Gastrocnemius medialis (tissue), 4 donors: ENCODE measurements at regions of chr2 and their contacts with region 1.

Region 1: GRCh38 chr2:74482801-74483674 is at the starts of genes CCDC142 and TTC31:
- DNase-seq: peak; percentile 96 to 97
- ATAC-seq: peak; percentile 99 to 100
- H3K4me3 ChIP-seq: peak within 1 kb of the TSS; percentile 82 to 97 (median 87)
- H3K27ac ChIP-seq: peak within 1 kb of the TSS; percentile 83 to 94 (median 88)
- H3K4me1 ChIP-seq: peaks cover 24 to 25% of the 10 kb centered on the region in 2 donors
- H3K27me3 ChIP-seq: no peaks in the 10 kb centered on the region
- CTCF ChIP-seq: peak; percentile 74 to 90 (median 85)
- POLR2A ChIP-seq: peak; percentile 25 to 45
- total RNA-seq, gene CCDC142: 5.5 to 7.3 (median 6.0) TPM
- total RNA-seq, gene TTC31: 6.1 to 9.6 (median 7.7) TPM

Region 2: GRCh38 chr2:74472086-74472944 is 10.7 kb before region 1 on chr2 and contains the start of gene MRPL53:
- in situ Hi-C with region 1: no loop called
- intact Hi-C with region 1: loop called (anchors 1 kb)
- DNase-seq: peak; percentile 86 to 90
- ATAC-seq: peak; percentile 95 to 96
- H3K4me3 ChIP-seq: peak within 1 kb of the TSS; percentile 67 to 88 (median 79)
- H3K27ac ChIP-seq: peak within 1 kb of the TSS; percentile 79 to 90 (median 87)
- H3K4me1 ChIP-seq: peaks cover 20 to 25% of the 10 kb centered on the region in 2 donors
- H3K27me3 ChIP-seq: no peaks in the 10 kb centered on the region
- CTCF ChIP-seq: no peak
- POLR2A ChIP-seq: peak; percentile 48 to 68
- total RNA-seq, gene MRPL53: 26.5 to 48.7 (median 41.5) TPM

Region 3: DNA sequence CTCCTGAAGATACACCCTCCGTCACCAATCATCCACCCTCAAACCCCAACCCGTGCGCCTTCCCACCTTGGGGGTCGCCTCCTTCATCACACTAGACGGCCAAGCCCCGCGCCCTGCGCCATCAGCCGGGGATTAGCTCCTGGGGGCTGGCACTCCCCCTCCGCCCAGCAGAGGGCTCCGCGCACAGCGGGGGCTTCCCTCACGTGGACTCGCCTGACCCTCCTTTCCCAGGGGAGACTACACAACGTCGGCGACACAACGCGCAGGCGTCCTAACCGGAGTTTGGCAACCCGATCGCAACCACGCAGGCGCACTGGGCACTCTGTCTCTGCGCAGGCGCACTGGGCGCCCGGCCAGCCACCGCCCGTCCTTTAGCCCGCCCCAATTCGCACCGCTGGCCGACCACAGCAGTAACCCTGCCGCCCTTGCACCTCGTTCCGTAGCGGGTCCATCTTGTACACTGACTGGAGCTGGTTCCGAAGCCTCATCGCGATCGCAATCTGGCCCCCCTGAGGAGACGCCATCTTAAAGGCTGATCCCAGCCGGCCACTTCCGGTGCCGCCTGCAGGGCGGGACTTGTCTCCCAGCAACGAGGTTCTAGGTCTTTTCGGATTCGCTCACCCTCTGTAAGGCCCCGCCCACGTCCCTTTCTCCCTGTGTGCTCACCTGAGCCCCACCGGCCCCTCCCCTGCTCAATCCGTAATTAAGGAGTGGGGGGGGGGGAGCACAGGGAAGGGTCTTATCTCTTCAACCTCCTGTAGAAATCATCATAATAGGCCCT is 24.3 kb after region 1 on chr2 and contains the start of gene PCGF1:
- in situ Hi-C with region 1: no loop called
- intact Hi-C with region 1: loop called (anchors 1 kb)
- DNase-seq: peak; percentile 98 to 99
- ATAC-seq: peak; percentile 98 to 99
- H3K4me3 ChIP-seq: peak within 1 kb of the TSS; percentile 75 to 99 (median 84)
- H3K27ac ChIP-seq: peak within 1 kb of the TSS; percentile 92 to 100 (median 98)
- H3K4me1 ChIP-seq: peaks cover 25 to 41% of the 10 kb centered on the region in 2 donors
- H3K27me3 ChIP-seq: peaks cover 26 to 53% (median 38%) of the 10 kb centered on the region in 3 donors
- CTCF ChIP-seq: peak in 4 of 5 experiments; percentile 18 to 29 (median 24)
- POLR2A ChIP-seq: no peak
- total RNA-seq, gene PCGF1: 14.2 to 23.6 (median 20.0) TPM

Region 4: DNA sequence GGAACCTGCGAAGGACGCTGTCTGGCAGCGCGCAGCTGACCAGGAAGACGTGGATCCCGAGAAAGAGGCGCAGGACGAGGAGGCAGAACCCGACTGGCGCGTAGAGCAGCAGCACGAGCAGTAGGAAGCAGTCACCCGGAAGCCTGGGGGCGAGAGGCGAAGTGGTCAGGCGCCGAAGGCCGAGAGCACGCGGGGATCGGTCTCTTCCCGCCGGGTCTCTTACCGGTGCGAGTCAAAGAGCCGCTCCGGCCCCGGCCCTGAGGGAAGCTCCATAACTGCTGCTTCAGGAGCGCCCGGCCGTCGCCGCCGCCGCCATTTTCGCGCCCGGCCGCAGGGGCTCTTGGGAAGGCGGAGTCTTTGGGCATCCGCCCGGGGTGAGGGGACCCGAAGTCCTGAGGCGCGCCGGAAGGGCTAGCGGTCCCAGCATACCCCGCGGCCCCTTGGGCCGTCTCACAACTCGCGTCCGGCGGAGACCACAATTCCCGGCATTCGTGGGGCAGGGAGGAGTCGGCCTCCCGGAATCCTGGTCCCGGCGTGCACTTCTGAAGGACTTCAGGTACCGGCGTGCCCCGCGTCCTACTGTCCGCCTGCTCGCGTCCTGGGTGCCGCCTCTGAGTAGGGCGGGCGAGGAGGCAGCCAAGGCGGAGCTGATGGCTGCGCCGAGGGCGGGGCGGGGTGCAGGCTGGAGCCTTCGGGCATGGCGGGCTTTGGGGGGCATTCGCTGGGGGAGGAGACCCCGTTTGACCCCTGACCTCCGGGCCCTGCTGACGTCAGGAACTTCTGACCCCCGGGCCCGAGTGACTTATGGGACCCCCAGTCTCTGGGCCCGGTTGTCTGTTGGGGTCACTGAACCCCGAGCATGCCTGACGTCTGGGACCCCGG is 46.6 kb after region 1 on chr2 and contains the starts of genes AUP1 and HTRA2:
- in situ Hi-C with region 1: loop called in 1 of 4 experiments (anchors 5 kb)
- intact Hi-C with region 1: loop called (anchors 1 kb)
- DNase-seq: peak; percentile 98
- ATAC-seq: peak; percentile 91 to 94
- H3K4me3 ChIP-seq: peak within 1 kb of the TSS; percentile 80 to 100 (median 93)
- H3K27ac ChIP-seq: peak within 1 kb of the TSS; percentile 84 to 94 (median 89)
- H3K4me1 ChIP-seq: peaks cover 19 to 28% of the 10 kb centered on the region in 2 donors
- H3K27me3 ChIP-seq: no peaks in the 10 kb centered on the region
- CTCF ChIP-seq: no peak
- POLR2A ChIP-seq: peak; percentile 70 to 89
- total RNA-seq, gene AUP1: 112 to 148 (median 115) TPM
- total RNA-seq, gene HTRA2: 24.2 to 38.5 (median 29.4) TPM

Region 5: DNA sequence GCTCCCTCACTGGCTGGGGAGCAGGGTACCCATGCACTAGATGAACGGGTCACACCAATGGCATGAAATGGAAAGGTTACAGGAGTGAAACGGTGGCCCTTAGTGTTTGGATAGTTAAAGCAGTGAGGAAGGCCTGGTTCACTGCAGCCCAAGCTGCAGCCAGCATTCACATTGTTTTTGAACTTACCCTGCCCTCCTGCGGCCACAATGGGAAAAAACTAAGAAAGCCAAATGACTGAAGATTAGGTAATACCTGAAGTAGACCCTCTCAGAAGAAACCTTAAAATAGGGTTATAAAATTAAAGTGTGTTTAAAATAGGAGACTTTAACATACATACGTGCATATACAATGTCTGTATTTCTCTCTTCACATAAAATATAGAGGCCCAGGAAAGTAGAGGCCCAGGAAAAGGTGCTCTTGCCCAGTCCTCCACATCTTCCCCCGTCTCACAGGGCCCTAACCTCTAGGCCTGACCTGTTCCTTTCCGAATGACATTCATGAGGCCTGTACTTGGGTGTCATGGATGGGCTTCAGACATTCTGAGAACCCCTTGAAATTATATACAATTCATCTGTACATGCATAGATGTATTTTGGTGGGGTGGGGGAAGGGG is 104.7 kb after region 1 on chr2:
- in situ Hi-C with region 1: loop called in 3 of 4 experiments (anchors 5 to 10 kb)
- intact Hi-C with region 1: loop called (anchors 1 kb)
- DNase-seq: peak; percentile 25 to 41
- ATAC-seq: peak; percentile 70 to 77
- H3K4me3 ChIP-seq: no peak overlapping the region
- H3K27ac ChIP-seq: no peak overlapping the region
- H3K4me1 ChIP-seq: no peaks in the 10 kb centered on the region
- H3K27me3 ChIP-seq: peaks cover 0 to 4% (median 2%) of the 10 kb centered on the region in 3 donors
- CTCF ChIP-seq: peak in 4 of 5 experiments; percentile 25 to 58 (median 50)
- POLR2A ChIP-seq: no peak

Region 6: GRCh38 chr2:74653985-74654882 is 171.2 kb after region 1 on chr2 and contains the start of gene SEMA4F:
- in situ Hi-C with region 1: no loop called
- intact Hi-C with region 1: loop called (anchors 1 kb)
- DNase-seq: peak; percentile 92 to 93
- ATAC-seq: peak; percentile 100
- H3K4me3 ChIP-seq: peak within 1 kb of the TSS; percentile 70 to 83 (median 79)
- H3K27ac ChIP-seq: peak within 1 kb of the TSS in 3 of 4 donors; percentile 38 to 55 (median 49)
- H3K4me1 ChIP-seq: peaks cover 6 to 16% of the 10 kb centered on the region in 2 donors
- H3K27me3 ChIP-seq: no peaks in the 10 kb centered on the region
- CTCF ChIP-seq: no peak
- POLR2A ChIP-seq: peak in 1 of 2 donors; percentile 56
- total RNA-seq, gene SEMA4F: 0.97 to 1.6 (median 1.4) TPM

Region 7: GRCh38 chr2:75123876-75124275 is 640.8 kb after region 1 on chr2:
- in situ Hi-C with region 1: no loop called
- intact Hi-C with region 1: no loop called
- DNase-seq: no peak
- ATAC-seq: no peak
- H3K4me3 ChIP-seq: no peak overlapping the region
- H3K27ac ChIP-seq: no peak overlapping the region
- H3K4me1 ChIP-seq: no peaks in the 10 kb centered on the region
- H3K27me3 ChIP-seq: no peaks in the 10 kb centered on the region
- CTCF ChIP-seq: no peak
- POLR2A ChIP-seq: no peak